Calu3 (cell line): ENCODE measurements at regions of chr14 and their contacts with region 1.

Region 1: DNA sequence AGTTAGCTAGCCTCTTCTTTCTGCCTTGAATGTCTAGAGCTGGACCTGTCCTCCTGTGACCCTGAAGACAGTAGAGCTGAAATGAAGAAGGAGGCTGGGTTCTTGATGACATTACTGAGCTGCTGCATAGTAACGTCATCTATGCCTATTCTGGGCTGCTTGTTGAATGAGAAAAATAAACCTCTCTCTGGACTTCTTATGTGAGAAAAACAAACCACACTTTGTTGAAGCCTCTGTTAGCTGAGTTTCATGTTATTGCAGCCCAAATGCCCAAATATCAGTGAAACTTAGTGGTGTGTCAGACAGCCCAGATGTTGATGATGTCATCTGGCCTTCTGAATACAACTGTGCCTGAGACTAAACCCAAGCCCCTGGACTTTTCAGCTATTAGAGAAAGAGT is 67.0 kb upstream of the MAX start:
- DNase-seq: no peak
- H3K4me3 Mint-ChIP-seq: no peak overlapping the region
- H3K27ac Mint-ChIP-seq: no peak overlapping the region
- H3K4me1 Mint-ChIP-seq: peaks cover 15% of the 10 kb centered on the region
- H3K27me3 Mint-ChIP-seq: no peaks in the 10 kb centered on the region
- CTCF ChIP-seq: no peak

Region 2: GRCh38 chr14:65356327-65356852 is 187.0 kb after region 1 on chr14:
- CTCF ChIA-PET with region 1: no interaction called
- intact Hi-C with region 1: loop called (anchors 5 kb)
- DNase-seq: peak; percentile 82
- H3K4me3 Mint-ChIP-seq: no peak overlapping the region
- H3K27ac Mint-ChIP-seq: peak overlapping the region; percentile 83
- H3K4me1 Mint-ChIP-seq: peaks cover 28% of the 10 kb centered on the region
- H3K27me3 Mint-ChIP-seq: no peaks in the 10 kb centered on the region
- CTCF ChIP-seq: no peak

Region 3: DNA sequence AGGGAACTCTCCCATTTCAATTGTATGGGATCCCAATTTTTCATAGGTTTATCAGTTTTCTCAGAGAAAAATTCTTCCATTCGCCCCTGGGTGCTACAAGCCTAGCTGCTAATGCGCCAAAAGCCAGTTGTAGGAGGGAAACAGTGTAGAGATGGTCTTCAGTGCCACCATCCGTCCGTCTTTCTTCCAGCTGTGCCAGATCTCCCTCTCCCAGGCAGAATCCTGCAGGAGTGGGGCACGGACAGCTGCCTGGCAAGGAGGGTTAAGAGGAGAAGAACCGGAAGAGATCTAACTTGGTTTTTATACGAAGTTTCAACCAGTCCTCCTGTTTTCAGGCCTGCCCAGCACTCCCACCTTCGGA is 204.3 kb after region 1 on chr14:
- CTCF ChIA-PET with region 1: no interaction called
- intact Hi-C with region 1: no loop called
- DNase-seq: no peak
- H3K4me3 Mint-ChIP-seq: no peak overlapping the region
- H3K27ac Mint-ChIP-seq: no peak overlapping the region
- H3K4me1 Mint-ChIP-seq: peaks cover 32% of the 10 kb centered on the region
- H3K27me3 Mint-ChIP-seq: no peaks in the 10 kb centered on the region
- CTCF ChIP-seq: no peak

Region 4: DNA sequence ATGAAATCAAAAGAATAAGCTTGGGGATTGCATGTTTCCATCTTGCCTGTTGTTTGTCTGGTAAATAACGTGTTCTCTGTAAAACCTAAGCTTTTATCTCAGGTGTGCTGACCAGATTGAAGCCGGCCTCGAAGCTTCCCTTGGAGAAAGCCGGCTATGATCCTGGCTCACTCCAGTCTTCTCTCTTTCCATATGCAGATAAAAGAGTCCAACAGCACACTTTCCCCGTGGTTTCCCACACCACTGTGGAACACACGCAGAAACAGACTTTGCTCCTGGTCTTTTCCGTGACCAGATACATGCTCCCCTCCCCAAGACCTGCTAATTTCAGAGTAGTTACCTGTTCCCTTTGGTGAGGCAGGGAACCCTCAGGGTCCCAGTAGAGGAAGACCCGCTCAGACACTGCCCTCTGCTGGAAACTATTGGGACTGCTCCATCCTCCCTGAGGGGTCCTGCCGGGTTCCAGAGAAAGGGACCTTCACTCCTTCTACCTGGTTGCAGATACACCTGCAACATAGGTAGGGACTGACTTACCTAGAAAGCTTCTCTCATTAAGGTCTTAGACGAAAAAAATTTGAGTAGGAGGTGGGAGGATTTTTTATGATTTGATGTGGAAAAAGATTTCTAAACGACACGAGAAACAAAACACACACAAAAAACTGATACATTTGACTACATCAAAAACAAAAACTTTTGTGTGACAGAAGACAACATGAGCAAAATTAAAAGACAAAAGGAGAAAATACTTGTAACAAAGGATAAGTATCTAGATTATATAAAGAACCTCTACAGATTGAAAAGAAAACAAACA is 901.4 kb after region 1 on chr14:
- CTCF ChIA-PET with region 1: interaction called, 5 read pairs
- intact Hi-C with region 1: loop called (anchors 5 kb)
- DNase-seq: peak; percentile 76
- H3K4me3 Mint-ChIP-seq: no peak overlapping the region
- H3K27ac Mint-ChIP-seq: no peak overlapping the region
- H3K4me1 Mint-ChIP-seq: no peaks in the 10 kb centered on the region
- H3K27me3 Mint-ChIP-seq: peaks cover 43% of the 10 kb centered on the region
- CTCF ChIP-seq: peak; percentile 81